Activated T-helper 1 cell treated with anti-CD3 and anti-CD28 coated beads, Interleukin-12 subunit alpha, Interleukin-12 subunit beta, Interleukin-2, Interleukin-4 antibody, amounts not matched to agents 30 ng/mL and 10 ng/mL and 1 ng/mL, durations not matched to agents 14 hours and 24 hours and 36 hours (primary cell): ENCODE measurements at regions of chr13 and their contacts with region 1.

Region 1: DNA sequence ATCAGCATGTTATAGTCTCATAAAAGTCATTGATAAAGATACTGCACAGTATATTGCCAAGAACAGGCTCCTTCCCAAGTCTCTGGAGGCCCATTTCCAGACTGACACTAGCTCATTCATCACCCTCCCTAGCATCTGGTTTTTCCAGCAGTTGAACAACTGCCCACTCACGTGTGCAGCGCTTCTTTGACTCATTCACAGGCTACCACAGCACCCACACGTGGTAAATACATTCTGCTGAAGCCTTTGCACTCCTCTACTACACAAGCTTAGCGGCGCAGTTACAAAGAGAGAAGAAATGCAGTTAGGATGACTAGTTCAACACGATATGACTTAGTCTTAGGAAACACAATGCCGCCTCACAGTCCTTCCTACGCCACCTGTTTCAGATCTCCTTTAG is 87.7 kb downstream of the DOCK9 start:
- DNase-seq: no peak
- H3K4me3 Mint-ChIP-seq: no peak overlapping the region
- H3K27ac Mint-ChIP-seq: peak overlapping the region; percentile 53
- H3K4me1 Mint-ChIP-seq: peaks cover 39% of the 10 kb centered on the region
- H3K27me3 Mint-ChIP-seq: no peaks in the 10 kb centered on the region

Region 2: GRCh38 chr13:98853771-98854221 is 36.4 kb before region 1 on chr13:
- intact Hi-C with region 1: loop called (anchors 1 kb)
- DNase-seq: peak; percentile 59
- H3K4me3 Mint-ChIP-seq: peak overlapping the region; percentile 36
- H3K27ac Mint-ChIP-seq: peak overlapping the region; percentile 13
- H3K4me1 Mint-ChIP-seq: peaks cover 21% of the 10 kb centered on the region
- H3K27me3 Mint-ChIP-seq: no peaks in the 10 kb centered on the region

Region 3: DNA sequence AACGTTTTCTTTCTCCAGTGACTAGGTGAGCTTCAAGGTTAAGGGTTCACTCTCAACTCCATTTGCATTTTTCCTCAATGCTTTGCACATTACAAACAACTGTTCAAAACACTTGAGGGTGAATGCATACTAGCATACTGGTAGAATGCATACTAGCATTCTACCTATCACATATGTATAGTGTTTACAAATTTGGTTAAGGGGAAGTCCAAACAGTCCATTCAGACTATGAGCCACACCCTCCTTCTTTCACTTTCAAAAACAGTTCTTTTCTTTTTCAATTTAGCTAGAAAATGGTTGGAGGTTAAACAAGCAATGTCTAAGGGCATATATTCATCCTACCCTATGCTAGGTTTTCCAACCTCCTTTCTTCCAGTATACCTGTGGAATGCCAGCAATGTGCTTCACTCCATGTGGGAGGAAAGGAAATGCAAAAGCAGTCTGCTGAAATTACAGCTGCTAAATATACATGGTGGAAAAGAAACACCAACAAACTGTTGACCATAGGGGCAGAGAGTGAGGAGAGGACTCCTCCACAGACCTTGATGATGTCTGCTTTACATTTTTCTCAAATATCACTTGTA is 14.9 kb before region 1 on chr13:
- intact Hi-C with region 1: loop called (anchors 1 kb)
- DNase-seq: no peak
- H3K4me3 Mint-ChIP-seq: peak overlapping the region; percentile 64
- H3K27ac Mint-ChIP-seq: peak overlapping the region; percentile 92
- H3K4me1 Mint-ChIP-seq: peaks cover 62% of the 10 kb centered on the region
- H3K27me3 Mint-ChIP-seq: no peaks in the 10 kb centered on the region

Region 4: GRCh38 chr13:98910501-98910951 is 20.3 kb after region 1 on chr13:
- intact Hi-C with region 1: loop called (anchors 1 kb)
- DNase-seq: peak; percentile 49
- H3K4me3 Mint-ChIP-seq: peak overlapping the region; percentile 35
- H3K27ac Mint-ChIP-seq: peak overlapping the region; percentile 97
- H3K4me1 Mint-ChIP-seq: peaks cover 56% of the 10 kb centered on the region
- H3K27me3 Mint-ChIP-seq: no peaks in the 10 kb centered on the region

Region 5: DNA sequence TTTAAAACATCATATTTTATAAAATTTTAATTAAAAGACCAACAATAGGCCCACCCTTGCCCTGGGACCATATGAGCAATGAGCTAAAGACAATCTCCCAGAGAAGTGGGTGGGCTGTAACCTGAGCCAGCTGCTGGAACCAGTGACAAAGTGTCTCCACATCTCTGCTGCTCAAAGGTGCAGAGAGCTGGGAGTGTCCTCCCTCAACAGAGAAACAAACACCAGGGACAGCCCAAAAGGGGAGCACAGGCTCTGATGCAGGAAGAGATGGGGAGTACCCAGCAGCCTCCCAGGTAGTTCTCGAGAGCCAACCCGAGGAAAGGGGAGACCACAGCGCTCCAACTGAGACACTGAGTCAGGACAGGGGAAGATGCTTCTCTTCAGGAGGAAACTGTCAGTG is 48.6 kb after region 1 on chr13:
- intact Hi-C with region 1: no loop called
- DNase-seq: no peak
- H3K4me3 Mint-ChIP-seq: no peak overlapping the region
- H3K27ac Mint-ChIP-seq: no peak overlapping the region
- H3K4me1 Mint-ChIP-seq: no peaks in the 10 kb centered on the region
- H3K27me3 Mint-ChIP-seq: peaks cover 2% of the 10 kb centered on the region

Region 6: GRCh38 chr13:99046851-99047250 is 156.7 kb after region 1 on chr13:
- intact Hi-C with region 1: loop called (anchors 1 kb)
- DNase-seq: no peak
- H3K4me3 Mint-ChIP-seq: peak overlapping the region; percentile 68
- H3K27ac Mint-ChIP-seq: peak overlapping the region; percentile 91
- H3K4me1 Mint-ChIP-seq: peaks cover 93% of the 10 kb centered on the region
- H3K27me3 Mint-ChIP-seq: no peaks in the 10 kb centered on the region

Region 7: DNA sequence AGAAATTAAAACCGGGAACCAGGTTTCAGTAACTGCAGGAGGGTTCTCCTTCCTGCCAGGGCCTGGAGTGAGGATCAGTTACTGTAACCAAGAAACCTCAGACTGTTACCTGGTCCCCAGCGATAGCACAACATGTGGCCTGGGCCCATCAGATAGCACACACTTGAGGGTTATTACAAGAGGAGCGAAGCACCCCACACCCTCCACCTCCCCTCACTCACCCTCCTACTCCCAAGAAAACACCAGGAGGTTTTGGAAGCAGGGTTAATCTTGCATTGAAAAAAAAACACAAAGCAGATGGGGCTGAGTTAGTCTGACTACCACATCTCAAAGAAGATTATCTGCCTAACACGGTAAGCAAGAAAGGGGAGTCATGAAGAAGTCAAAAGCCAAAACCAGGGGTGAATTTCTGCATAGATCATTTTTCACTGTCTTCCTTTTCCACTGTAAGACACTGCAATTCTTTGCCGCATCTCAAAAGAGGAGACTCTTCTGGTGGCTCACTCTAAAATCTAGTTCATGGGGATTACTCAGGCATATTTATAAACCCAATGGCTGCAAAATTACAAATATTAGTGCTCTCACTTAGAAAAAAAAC is 163.5 kb after region 1 on chr13:
- intact Hi-C with region 1: loop called (anchors 1 kb)
- DNase-seq: no peak
- H3K4me3 Mint-ChIP-seq: peak overlapping the region; percentile 48
- H3K27ac Mint-ChIP-seq: peak overlapping the region; percentile 28
- H3K4me1 Mint-ChIP-seq: peaks cover 67% of the 10 kb centered on the region
- H3K27me3 Mint-ChIP-seq: no peaks in the 10 kb centered on the region

Region 8: DNA sequence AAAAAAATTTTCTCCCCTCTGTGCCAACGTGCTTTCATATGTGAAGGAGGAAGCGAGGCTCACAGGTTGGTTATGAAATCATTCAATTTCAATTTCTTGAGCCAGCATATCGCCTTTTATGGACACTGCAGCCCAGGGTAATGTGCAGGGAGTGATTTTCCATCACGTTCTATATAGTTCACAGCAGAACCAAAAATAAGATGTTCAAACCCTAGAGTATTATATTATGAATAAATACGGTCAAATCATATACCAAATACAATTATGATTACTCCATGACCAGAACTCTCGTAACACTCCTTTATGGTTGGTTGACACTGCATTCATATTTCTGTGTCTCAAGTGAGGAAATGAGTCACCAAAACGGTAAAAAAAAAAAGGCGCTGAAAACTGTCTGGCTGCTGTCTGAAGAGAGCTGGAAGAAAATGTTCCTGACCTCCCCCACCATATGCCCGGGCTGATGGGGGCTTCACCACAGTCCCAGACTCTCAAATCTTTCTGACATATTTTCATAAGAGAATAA is 234.7 kb after region 1 on chr13:
- intact Hi-C with region 1: loop called (anchors 1 kb)
- DNase-seq: no peak
- H3K4me3 Mint-ChIP-seq: peak overlapping the region; percentile 19
- H3K27ac Mint-ChIP-seq: peak overlapping the region; percentile 31
- H3K4me1 Mint-ChIP-seq: peaks cover 21% of the 10 kb centered on the region
- H3K27me3 Mint-ChIP-seq: peaks cover 2% of the 10 kb centered on the region